PC-3 (cell line): ENCODE measurements at regions of chr4 and their contacts with region 1.

Region 1: DNA sequence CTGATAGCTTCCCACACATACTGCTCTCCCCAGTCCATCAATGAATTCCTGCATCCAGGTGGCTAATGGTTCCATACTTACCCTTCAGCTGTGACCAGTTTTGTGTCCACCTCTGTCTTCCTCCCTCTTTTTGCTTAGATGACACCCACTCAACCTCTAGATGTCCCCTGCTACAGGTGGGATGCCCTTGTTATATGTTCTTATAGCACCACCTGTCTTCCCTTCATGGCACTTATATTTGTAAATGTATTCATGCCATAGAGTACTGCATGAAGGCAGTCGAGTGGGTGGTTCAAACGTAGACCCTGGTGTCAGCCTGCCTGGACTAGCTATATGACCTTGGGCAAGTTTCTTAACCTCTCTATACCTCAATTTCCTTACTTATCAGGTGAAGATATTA is 6.5 kb upstream of the USP46 start:
- DNase-seq: peak; percentile 47
- ATAC-seq: peak; percentile 86
- H3K4me3 ChIP-seq: no peak overlapping the region
- H3K27ac ChIP-seq: no peak overlapping the region
- H3K4me1 ChIP-seq: peaks cover under 1% of the 10 kb centered on the region; the same call in 1 of the 2 replicates
- H3K27me3 ChIP-seq: no peaks in the 10 kb centered on the region
- CTCF ChIP-seq: peak; percentile 72

Region 2: DNA sequence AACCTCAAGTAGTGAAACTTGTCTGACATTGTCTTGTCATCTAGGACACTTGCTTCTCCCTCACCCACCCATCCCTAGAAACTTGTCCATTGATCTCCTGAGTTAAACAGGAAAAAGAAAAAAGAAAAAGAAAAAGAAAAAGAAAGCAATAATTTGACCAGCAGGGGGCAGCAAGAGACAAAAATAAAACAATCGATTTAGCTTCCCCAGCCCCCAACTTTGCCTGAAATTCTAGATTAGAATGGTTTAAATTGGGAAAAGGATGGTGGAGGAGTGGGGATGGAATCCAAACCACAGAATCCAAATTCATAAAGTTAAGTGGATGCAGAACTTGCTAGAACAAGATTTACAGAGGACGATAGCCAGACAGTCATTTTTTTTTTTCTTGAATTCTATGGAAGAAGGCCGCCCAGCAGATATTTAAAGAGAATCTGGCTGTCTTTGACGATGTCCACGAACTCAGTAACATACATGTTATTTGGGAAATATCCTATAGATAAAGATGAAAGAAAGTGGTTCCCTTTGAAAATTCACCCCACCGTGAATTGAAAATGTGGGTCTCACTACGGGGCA is 289.4 kb before region 1 on chr4:
- CTCF ChIA-PET with region 1: no interaction called
- POLR2A ChIA-PET with region 1: no interaction called
- intact Hi-C with region 1: loop called (anchors 5 kb)
- DNase-seq: peak; percentile 77
- ATAC-seq: no peak; the same call in 1 of the 2 replicates
- H3K4me3 ChIP-seq: no peak overlapping the region
- H3K27ac ChIP-seq: no peak overlapping the region
- H3K4me1 ChIP-seq: peaks cover 11% of the 10 kb centered on the region
- H3K27me3 ChIP-seq: peaks cover 24% of the 10 kb centered on the region
- CTCF ChIP-seq: peak; percentile 88

Region 3: GRCh38 chr4:52545099-52546069 is 120.2 kb before region 1 on chr4:
- CTCF ChIA-PET with region 1: interaction called, 6 read pairs
- POLR2A ChIA-PET with region 1: no interaction called
- intact Hi-C with region 1: loop called (anchors 2 kb)
- DNase-seq: peak; percentile 90
- ATAC-seq: peak; percentile 89
- H3K4me3 ChIP-seq: peak overlapping the region; percentile 38; the same call in 1 of the 2 replicates
- H3K27ac ChIP-seq: no peak overlapping the region
- H3K4me1 ChIP-seq: peaks cover 3% of the 10 kb centered on the region; the same call in 1 of the 2 replicates
- H3K27me3 ChIP-seq: peaks cover 11% of the 10 kb centered on the region; the same call in 1 of the 2 replicates
- CTCF ChIP-seq: peak; percentile 98

Region 4: GRCh38 chr4:52822583-52823477 is 157.2 kb after region 1 on chr4:
- CTCF ChIA-PET with region 1: no interaction called
- POLR2A ChIA-PET with region 1: no interaction called
- intact Hi-C with region 1: no loop called
- DNase-seq: peak; percentile 88
- ATAC-seq: peak; percentile 37
- H3K4me3 ChIP-seq: peak overlapping the region; percentile 17; the same call in 1 of the 2 replicates
- H3K27ac ChIP-seq: peak overlapping the region; percentile 85
- H3K4me1 ChIP-seq: peaks cover 19% of the 10 kb centered on the region
- H3K27me3 ChIP-seq: no peaks in the 10 kb centered on the region
- CTCF ChIP-seq: no peak